ENCODE measurements at regions of chr5 and their contacts with region 1.

Region 1: DNA sequence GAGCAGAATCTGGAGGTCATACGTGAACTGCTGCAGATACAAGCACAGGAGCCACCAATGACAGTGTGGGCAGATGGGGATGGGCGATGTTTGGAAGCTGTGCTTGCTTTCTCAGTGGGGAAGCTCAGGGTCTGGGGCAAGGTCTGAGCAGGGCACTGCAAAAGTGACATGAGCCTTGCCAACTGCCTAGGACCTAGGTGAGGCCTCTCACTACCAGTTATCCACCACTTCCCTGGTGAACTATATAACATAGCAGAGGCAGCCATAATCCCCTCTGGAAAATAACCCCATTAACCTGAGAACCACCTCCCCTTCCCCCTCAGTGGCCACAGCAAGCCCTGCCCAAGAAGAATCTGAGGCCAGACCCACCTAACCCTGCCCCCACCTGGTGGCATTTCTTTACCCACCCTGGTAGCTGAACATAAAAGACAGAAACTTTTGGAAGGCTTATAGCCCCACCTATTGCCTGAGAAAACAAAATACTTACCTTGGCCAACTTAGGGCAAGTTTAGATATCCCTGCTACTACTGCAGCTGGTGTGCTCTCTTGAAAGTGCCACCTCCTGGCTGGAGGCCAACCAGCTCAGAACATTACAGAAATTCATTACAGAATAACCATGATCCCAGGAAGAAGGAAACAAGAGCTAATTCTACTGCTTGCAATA is 18.8 kb upstream of the SPEF2 start:
- DNase-seq: no peak
- ATAC-seq: peak; percentile 87
- H3K4me3 ChIP-seq: no peak overlapping the region
- H3K27ac ChIP-seq: no peak overlapping the region
- H3K4me1 ChIP-seq: no peaks in the 10 kb centered on the region
- H3K27me3 ChIP-seq: no peaks in the 10 kb centered on the region
- CTCF ChIP-seq: peak in 2 of 3 experiments; percentile 21 to 41; a peak in 2 of 6 replicates
- EP300 ChIP-seq: no peak
- POLR2A ChIP-seq: no peak
- RAD21 ChIP-seq: peak; percentile 29; the same call in 1 of the 2 replicates

Region 2: GRCh38 chr5:35302544-35302943 is 296.3 kb before region 1 on chr5:
- CTCF ChIA-PET with region 1: no interaction called
- POLR2A ChIA-PET with region 1: no interaction called
- RAD21 ChIA-PET with region 1: no interaction called
- SMC1A ChIA-PET with region 1: no interaction called
- in situ Hi-C with region 1: no loop called
- intact Hi-C with region 1: loop called (anchors 5 kb)
- DNase-seq: peak; percentile 92
- ATAC-seq: peak; percentile 93
- H3K4me3 ChIP-seq: no peak overlapping the region
- H3K27ac ChIP-seq: peak overlapping the region; percentile 13; the same call in 1 of the 2 replicates
- H3K4me1 ChIP-seq: no peaks in the 10 kb centered on the region; the same call in 1 of the 2 replicates
- H3K27me3 ChIP-seq: no peaks in the 10 kb centered on the region
- CTCF ChIP-seq: no peak
- EP300 ChIP-seq: peak; percentile 66 to 69; a peak in 2 of 4 replicates
- POLR2A ChIP-seq: no peak
- RAD21 ChIP-seq: no peak

Region 3: DNA sequence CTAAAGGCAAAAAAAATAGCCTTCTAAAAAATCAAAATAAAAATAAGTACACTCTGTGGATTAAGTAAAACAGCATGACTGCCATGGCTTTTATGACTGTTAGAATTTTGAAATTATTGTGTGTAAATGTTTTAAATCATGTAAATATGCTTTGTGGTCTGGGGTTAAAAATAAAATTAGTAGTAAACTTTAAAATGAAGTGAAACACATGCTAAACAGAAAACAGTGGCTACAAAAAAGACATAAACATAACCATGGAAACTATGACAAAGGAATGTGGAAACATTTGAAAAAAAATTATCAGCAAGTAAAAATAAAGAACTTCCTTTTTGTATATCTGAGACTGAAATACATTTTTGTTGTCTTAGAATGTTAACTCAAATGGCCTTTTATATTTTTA is 115.6 kb before region 1 on chr5:
- CTCF ChIA-PET with region 1: no interaction called
- POLR2A ChIA-PET with region 1: no interaction called
- RAD21 ChIA-PET with region 1: no interaction called
- SMC1A ChIA-PET with region 1: no interaction called
- in situ Hi-C with region 1: no loop called
- intact Hi-C with region 1: no loop called
- DNase-seq: no peak
- ATAC-seq: no peak; the same call in 2 of the 3 replicates
- H3K4me3 ChIP-seq: no peak overlapping the region
- H3K27ac ChIP-seq: no peak overlapping the region
- H3K4me1 ChIP-seq: no peaks in the 10 kb centered on the region
- H3K27me3 ChIP-seq: no peaks in the 10 kb centered on the region
- CTCF ChIP-seq: no peak
- EP300 ChIP-seq: no peak
- POLR2A ChIP-seq: no peak
- RAD21 ChIP-seq: no peak